Left ventricle myocardium inferior (tissue), 1 donor: ENCODE measurements at regions of chr3 and their contacts with region 1.

Region 1: DNA sequence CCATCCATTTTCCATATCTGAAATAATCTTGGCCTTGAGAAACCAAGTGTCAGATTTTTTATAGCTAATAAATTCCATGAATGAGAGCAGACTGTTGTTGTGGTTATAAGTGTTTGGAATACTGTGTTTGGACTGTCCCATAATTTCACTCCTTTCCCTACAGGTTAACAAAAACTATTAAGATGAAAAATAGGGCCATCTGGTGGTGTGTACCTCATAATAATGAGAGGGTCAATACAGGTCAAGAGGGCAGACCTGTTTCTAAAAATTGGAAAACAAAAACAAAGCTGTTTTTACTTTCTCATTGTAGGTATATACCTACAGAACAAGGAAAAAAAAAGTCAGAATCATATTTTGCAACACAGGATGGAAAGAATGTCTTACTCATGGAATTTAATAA is 553.8 kb upstream of the SGO1 start:
- DNase-seq: no peak
- H3K4me3 ChIP-seq: no peak overlapping the region
- H3K27ac ChIP-seq: no peak overlapping the region
- H3K4me1 ChIP-seq: no peaks in the 10 kb centered on the region
- H3K27me3 ChIP-seq: no peaks in the 10 kb centered on the region
- CTCF ChIP-seq: peak; percentile 54

Region 2: GRCh38 chr3:20511863-20512505 is 227.8 kb before region 1 on chr3:
- intact Hi-C with region 1: loop called (anchors 5 kb)
- DNase-seq: no peak
- H3K4me3 ChIP-seq: no peak overlapping the region
- H3K27ac ChIP-seq: no peak overlapping the region
- H3K4me1 ChIP-seq: peaks cover 8% of the 10 kb centered on the region
- H3K27me3 ChIP-seq: no peaks in the 10 kb centered on the region
- CTCF ChIP-seq: peak; percentile 73

Region 3: DNA sequence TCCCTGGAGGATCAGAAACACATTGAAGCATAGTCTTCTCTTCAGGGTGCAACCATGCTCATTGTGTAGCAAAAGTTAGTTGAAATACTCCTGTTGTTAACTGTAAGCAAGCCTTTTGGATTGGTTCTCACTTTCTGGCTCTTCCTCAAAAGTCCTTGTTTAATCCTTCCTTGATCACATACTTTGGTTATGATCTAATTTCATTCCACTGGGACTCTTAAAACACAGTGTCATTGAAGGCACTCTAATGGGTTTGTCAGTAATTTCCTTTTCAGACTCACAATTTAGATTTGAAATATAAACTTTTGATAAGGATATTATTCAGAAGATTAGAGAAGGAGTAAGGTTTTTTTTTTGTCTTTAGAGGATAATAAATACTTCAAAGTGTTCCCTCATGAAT is 102.1 kb before region 1 on chr3:
- intact Hi-C with region 1: no loop called
- DNase-seq: no peak
- H3K4me3 ChIP-seq: no peak overlapping the region
- H3K27ac ChIP-seq: no peak overlapping the region
- H3K4me1 ChIP-seq: no peaks in the 10 kb centered on the region
- H3K27me3 ChIP-seq: no peaks in the 10 kb centered on the region
- CTCF ChIP-seq: no peak

Region 4: DNA sequence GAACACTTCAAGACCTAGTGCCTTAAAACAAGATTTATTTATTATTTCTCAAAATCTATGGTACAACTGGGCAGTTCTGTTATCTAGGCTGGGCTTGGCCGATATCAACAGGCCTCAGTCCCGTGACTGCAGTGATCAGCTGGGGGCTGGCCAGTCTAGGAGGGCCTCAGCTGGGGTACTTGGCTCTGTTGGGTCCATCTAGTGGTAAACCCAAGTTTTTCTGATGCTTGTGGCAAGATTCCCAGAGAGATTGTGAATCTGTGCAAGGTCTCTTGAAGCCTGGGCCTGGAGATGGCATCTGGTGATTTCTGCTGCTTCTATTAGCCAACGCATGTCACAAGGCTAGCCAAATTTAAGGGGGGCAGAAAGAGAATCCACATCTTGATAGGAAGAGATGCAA is 71.4 kb before region 1 on chr3:
- intact Hi-C with region 1: no loop called
- DNase-seq: no peak
- H3K4me3 ChIP-seq: no peak overlapping the region
- H3K27ac ChIP-seq: peak overlapping the region; percentile 80
- H3K4me1 ChIP-seq: peaks cover 45% of the 10 kb centered on the region
- H3K27me3 ChIP-seq: no peaks in the 10 kb centered on the region
- CTCF ChIP-seq: peak; percentile 15